ENCODE measurements at regions of chr11 and their contacts with region 1.

Region 1: DNA sequence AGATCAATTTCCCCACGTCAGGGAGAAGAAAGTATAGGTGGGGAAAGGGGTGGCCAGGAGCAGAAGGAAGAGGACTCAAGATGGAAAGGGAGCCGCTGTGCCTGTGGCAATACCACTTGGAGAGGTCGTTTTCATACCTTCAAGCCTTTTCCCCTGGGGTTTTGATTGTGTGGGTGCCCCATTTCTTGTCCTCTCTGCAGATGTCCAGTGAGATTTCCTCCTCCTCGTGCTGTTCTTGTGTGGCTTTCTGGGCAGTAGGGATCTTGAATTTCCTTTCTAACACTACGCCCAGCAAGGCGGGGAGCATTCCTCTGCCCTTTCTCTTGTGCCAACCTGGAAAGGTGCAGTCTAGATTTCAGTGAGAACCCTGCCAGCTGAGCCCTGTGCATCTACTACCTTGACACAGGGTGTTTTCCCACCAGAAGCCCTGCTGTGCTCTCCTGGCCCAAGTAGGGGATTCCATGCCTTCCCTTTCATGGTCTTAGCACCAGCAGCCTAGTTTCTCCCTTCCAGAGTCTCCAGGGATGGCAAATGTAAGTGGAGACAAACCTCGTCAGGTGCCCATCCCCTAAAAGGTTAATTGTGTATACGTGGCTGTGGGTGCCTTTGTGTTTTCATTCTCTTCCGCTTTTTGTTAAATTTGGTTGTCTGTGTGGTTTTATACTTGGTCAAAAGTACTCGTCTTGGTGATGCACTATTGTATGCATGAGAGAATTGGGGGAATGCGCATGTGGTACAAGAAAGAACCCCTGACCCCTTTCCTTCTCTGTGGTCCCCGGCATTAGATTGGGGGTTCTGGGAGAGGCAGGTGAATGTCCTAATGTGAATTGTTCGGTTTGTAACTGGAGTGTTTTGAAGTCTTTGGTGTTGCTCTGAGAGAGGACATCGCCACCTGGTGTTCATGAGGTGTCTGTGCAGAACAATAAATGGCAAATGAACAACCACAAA is 71.4 kb upstream of the MPEG1 start:
- DNase-seq: peak in 8 of 9 experiments; percentile 26 to 78 (median 42)
- ATAC-seq: peak; percentile 87
- H3K4me3 ChIP-seq: no peak overlapping the region
- H3K4me3 Mint-ChIP-seq: peak overlapping the region; percentile 75
- H3K27ac ChIP-seq: no peak overlapping the region
- H3K27ac Mint-ChIP-seq: peak overlapping the region; percentile 15
- H3K4me1 ChIP-seq: peaks cover 14% of the 10 kb centered on the region
- H3K4me1 Mint-ChIP-seq: peaks cover 17% of the 10 kb centered on the region
- H3K27me3 ChIP-seq: no peaks in the 10 kb centered on the region
- H3K27me3 Mint-ChIP-seq: peaks cover 8% of the 10 kb centered on the region
- CTCF ChIP-seq: peak; percentile 65

Region 2: GRCh38 chr11:59207988-59208451 is 76.1 kb before region 1 on chr11:
- CTCF ChIA-PET with region 1: no interaction called
- POLR2A ChIA-PET with region 1: no interaction called
- intact Hi-C with region 1: loop called in 1 of 2 experiments (anchors 2 kb)
- DNase-seq: peak in 8 of 9 experiments; percentile 9 to 72 (median 34)
- ATAC-seq: peak; percentile 69
- H3K4me3 ChIP-seq: no peak overlapping the region
- H3K4me3 Mint-ChIP-seq: peak overlapping the region; percentile 19
- H3K27ac ChIP-seq: no peak overlapping the region
- H3K27ac Mint-ChIP-seq: no peak overlapping the region
- H3K4me1 ChIP-seq: peaks cover 15% of the 10 kb centered on the region
- H3K4me1 Mint-ChIP-seq: peaks cover 16% of the 10 kb centered on the region
- H3K27me3 ChIP-seq: peaks cover 0 to 3% of the 10 kb centered on the region in 2 experiments
- H3K27me3 Mint-ChIP-seq: peaks cover 5% of the 10 kb centered on the region
- CTCF ChIP-seq: peak; percentile 49

Region 3: DNA sequence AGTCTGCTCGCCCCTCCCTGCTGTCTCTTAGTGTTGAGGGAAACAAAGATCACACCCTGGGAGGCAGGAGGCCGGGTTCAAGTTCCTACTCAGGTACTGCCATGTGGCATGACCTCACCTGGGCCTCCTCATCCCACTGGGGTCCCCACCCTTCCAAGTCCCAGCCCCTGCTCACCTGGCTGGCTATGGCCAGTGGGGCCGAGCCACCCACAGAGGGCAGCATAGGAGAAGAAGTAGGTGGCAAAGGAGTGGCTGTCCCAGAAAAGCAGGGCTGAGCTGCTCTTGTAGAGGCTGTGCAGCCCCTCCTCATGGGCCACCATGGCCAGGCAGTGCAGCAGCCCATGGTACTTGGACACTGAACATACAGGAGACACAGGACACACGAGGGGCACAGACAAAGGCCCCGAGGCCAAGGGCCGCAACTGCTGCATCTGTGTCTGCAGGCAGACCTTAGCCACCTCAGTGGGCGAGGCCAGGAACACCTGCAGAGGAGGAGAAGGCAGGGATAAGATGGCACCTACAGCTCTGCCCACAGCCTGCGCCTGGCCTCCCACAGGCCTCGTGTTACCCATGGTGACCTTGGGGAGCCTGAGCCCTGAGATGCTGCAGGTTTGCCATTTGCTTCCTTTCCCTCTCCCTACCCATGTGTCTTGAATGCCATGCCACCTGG is 20.7 kb before region 1 on chr11:
- CTCF ChIA-PET with region 1: interaction called, 8 read pairs
- POLR2A ChIA-PET with region 1: no interaction called
- intact Hi-C with region 1: loop called in 1 of 2 experiments (anchors 1 kb)
- DNase-seq: peak in 2 of 9 experiments; percentile 12 to 30
- ATAC-seq: no peak
- H3K4me3 ChIP-seq: no peak overlapping the region
- H3K4me3 Mint-ChIP-seq: no peak overlapping the region
- H3K27ac ChIP-seq: no peak overlapping the region
- H3K27ac Mint-ChIP-seq: no peak overlapping the region
- H3K4me1 ChIP-seq: no peaks in the 10 kb centered on the region
- H3K4me1 Mint-ChIP-seq: no peaks in the 10 kb centered on the region
- H3K27me3 ChIP-seq: no peaks in the 10 kb centered on the region
- H3K27me3 Mint-ChIP-seq: peaks cover 2% of the 10 kb centered on the region
- CTCF ChIP-seq: no peak

Region 4: DNA sequence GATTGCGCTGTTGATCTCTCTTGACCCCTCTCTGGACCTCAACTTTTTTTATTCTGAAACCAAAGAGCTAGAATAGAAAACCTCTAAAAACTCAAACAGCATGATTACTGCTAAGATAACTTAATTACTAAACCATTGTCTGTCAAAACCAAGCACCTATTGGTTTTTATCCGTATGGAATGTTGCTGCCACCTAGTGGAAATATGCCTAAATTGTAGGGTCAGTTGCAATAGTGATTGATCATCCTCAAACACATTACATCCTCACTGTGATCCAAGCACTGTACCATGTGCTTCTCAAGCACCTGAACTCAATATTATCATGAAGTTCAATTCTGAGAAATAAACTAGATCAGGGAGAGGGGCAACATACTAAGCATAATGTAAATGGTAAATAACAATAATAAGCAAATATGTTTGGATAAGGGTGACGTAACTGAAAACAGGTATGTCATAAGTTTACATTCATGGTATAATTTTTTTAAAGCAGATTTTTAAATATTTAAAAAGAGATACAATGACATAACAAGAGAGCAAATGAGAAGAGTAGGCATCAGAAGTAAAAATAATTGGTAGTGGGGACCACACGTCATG is 145.9 kb after region 1 on chr11:
- CTCF ChIA-PET with region 1: no interaction called
- POLR2A ChIA-PET with region 1: no interaction called
- intact Hi-C with region 1: loop called in 1 of 2 experiments (anchors 2 kb)
- DNase-seq: peak in 5 of 9 experiments; percentile 2 to 73 (median 31)
- ATAC-seq: peak; percentile 52
- H3K4me3 ChIP-seq: no peak overlapping the region
- H3K4me3 Mint-ChIP-seq: no peak overlapping the region
- H3K27ac ChIP-seq: no peak overlapping the region
- H3K27ac Mint-ChIP-seq: no peak overlapping the region
- H3K4me1 ChIP-seq: no peaks in the 10 kb centered on the region
- H3K4me1 Mint-ChIP-seq: no peaks in the 10 kb centered on the region
- H3K27me3 ChIP-seq: no peaks in the 10 kb centered on the region
- H3K27me3 Mint-ChIP-seq: peaks cover 10% of the 10 kb centered on the region
- CTCF ChIP-seq: peak; percentile 86